ENCODE measurements at regions of chr12 and their contacts with region 1.

Region 1: DNA sequence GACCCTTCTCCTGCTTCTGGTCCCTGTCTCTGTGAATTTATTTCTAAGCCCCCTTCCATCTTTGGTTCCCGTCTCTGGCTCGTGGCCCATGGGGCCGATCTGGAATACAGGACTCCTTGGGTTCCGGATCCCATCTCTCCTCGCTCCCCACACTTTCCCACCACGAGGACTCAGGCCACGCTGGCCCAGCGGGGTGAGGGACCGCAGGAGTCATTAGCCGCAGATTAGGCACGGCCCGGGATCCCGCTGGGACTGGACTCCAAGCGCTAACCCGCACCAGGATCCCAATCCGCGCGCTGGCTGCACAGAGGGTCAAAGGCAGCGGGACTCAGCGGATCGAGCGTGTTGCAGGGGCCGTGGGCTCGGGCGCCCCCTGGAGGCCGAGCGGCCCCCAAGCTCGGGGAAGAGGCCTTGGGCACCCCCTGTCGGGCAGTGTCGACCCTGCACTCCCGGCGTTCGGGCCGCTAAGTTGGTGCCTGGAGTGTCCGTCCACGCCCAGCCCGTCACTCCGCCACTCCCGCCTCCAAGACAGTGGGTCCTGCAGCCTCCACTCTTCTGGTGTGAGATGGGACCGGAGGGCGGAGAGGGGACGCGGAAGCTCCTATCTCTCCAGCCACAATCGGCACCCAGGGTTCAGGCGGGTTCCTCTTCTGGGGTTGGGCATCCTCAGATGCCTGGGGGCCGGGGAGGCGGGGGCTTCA is 9.5 kb downstream of the SHMT2 start:
- DNase-seq: no peak
- ATAC-seq: peak; percentile 72
- H3K4me3 ChIP-seq: peak overlapping the region; percentile 68
- H3K27ac ChIP-seq: no peak overlapping the region
- H3K4me1 ChIP-seq: peaks cover 47% of the 10 kb centered on the region
- H3K27me3 ChIP-seq: peaks cover 5 to 8% of the 10 kb centered on the region in 2 experiments; a peak in 3 of 4 replicates
- CTCF ChIP-seq: peak; percentile 100; a peak in 5 of 6 replicates
- EP300 ChIP-seq: no peak
- POLR2A ChIP-seq: peak; percentile 66; the same call in 1 of the 2 replicates
- RAD21 ChIP-seq: peak; percentile 88

Region 2: GRCh38 chr12:57182921-57183790 is 55.8 kb before region 1 on chr12:
- CTCF ChIA-PET with region 1: interaction called, 9 read pairs
- POLR2A ChIA-PET with region 1: no interaction called
- RAD21 ChIA-PET with region 1: no interaction called
- SMC1A ChIA-PET with region 1: interaction called, 3 read pairs
- in situ Hi-C with region 1: no loop called
- intact Hi-C with region 1: loop called (anchors 2 kb)
- DNase-seq: peak; percentile 15
- ATAC-seq: peak; percentile 98
- H3K4me3 ChIP-seq: no peak overlapping the region
- H3K27ac ChIP-seq: no peak overlapping the region
- H3K4me1 ChIP-seq: no peaks in the 10 kb centered on the region
- H3K27me3 ChIP-seq: no peaks in the 10 kb centered on the region; a peak in 2 of 4 replicates
- CTCF ChIP-seq: peak; percentile 96 to 98 (median 97)
- EP300 ChIP-seq: no peak
- POLR2A ChIP-seq: no peak
- RAD21 ChIP-seq: peak; percentile 89

Region 3: DNA sequence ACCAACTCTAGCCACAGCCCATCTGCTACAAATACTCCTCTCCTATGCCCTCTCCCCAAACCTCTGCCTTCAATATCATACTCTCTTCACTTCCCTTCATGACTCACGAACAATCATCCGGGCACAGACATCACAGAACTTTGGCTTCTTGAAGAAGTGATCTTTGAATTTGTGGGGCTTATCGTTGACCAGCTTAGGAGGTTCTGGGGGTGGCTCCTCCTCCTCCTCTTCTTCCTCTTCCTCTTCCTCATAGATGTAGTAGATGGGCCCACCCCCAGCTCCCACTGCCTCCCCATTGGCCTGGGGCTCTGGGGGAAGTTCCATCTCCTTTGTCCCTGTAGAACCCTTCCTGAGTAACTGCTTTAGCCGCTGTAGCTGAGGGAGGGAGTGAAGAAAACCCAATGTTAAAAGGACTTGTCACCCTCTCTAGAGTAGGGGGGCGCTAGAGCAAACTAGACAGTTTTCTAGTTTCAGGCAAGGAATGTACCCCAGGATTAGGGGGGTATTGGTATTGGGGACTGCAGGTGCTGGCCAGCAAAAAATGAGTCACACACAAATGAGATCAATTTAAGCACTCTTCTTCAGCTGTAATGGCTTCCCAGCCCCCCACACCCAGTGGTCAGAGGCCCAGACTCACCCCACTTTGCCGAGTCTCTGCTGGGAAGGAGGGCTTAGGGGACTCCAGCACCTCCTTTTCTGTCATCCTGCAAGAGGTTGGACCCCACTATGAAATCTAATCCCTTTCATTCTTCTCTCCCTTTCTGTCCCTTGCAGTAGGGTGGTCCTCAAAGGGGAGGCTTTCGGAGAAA is 10.1 kb after region 1 on chr12:
- CTCF ChIA-PET with region 1: interaction called, 25 read pairs
- POLR2A ChIA-PET with region 1: no interaction called
- RAD21 ChIA-PET with region 1: interaction called, 5 read pairs
- SMC1A ChIA-PET with region 1: no interaction called
- in situ Hi-C with region 1: no loop called
- intact Hi-C with region 1: no loop called
- DNase-seq: no peak
- ATAC-seq: peak; percentile 95
- H3K4me3 ChIP-seq: peak overlapping the region; percentile 41; the same call in 1 of the 2 replicates
- H3K27ac ChIP-seq: no peak overlapping the region
- H3K4me1 ChIP-seq: peaks cover 1% of the 10 kb centered on the region; the same call in 1 of the 2 replicates
- H3K27me3 ChIP-seq: no peaks in the 10 kb centered on the region
- CTCF ChIP-seq: no peak
- EP300 ChIP-seq: no peak
- POLR2A ChIP-seq: no peak
- RAD21 ChIP-seq: no peak

Measured in GM12878 (cell line).